MCF 10A (cell line): ENCODE measurements at regions of chrX and their contacts with region 1.

Region 1: GRCh38 chrX:41796577-41796976 is 72.6 kb downstream of the GPR82 start:
- DNase-seq: no peak
- H3K4me3 Mint-ChIP-seq: no peak overlapping the region
- H3K27ac Mint-ChIP-seq: no peak overlapping the region
- H3K4me1 Mint-ChIP-seq: no peaks in the 10 kb centered on the region
- H3K27me3 Mint-ChIP-seq: peaks cover 30% of the 10 kb centered on the region
- CTCF ChIP-seq: no peak

Region 2: DNA sequence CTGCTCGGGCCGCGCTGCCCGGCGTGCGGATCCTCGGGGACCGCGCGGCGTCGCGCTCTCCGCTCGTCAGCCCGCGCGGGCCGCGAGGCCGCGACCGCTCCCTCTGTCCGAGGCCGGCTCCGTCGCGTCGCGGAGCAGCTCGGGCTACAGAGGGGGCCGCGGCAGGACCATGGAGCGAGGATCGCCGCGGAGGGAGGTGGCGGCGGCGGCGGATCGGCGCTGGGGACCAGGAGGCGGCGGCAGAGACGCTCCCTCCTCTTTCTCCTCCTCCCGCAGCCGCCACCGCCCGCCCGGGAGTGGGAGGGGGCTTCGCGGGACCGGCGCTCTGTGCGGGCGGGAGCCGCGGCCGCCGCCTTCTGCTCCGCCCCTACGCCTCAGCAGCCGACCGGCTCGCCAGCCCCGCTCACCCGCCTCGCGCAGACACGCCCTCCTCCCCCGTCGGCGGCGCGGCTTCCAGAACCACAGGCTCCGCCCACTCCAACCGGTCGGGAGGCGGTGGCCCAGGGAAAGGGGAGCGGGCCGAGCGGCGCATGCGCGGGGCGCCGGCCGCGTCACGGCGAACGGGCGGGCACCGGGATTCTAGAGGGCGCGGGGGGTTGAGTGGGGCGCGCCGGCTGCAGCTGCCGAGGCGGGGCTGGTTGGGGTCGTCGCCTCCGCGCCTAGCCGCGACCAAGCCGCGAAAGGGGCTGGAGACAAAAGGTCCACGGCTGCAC is 126.8 kb after region 1 on chrX and contains the start of gene CASK:
- CTCF ChIA-PET with region 1: interaction called, 5 read pairs
- POLR2A ChIA-PET with region 1: no interaction called
- intact Hi-C with region 1: loop called (anchors 5 kb)
- DNase-seq: peak; percentile 87
- H3K4me3 Mint-ChIP-seq: peak within 1 kb of the TSS; percentile 82
- H3K27ac Mint-ChIP-seq: peak within 1 kb of the TSS; percentile 88
- H3K4me1 Mint-ChIP-seq: no peaks in the 10 kb centered on the region
- H3K27me3 Mint-ChIP-seq: peaks cover 26% of the 10 kb centered on the region
- CTCF ChIP-seq: no peak
- total RNA-seq, gene CASK: 34.9 and 43.2 TPM in 2 replicates

Region 3: DNA sequence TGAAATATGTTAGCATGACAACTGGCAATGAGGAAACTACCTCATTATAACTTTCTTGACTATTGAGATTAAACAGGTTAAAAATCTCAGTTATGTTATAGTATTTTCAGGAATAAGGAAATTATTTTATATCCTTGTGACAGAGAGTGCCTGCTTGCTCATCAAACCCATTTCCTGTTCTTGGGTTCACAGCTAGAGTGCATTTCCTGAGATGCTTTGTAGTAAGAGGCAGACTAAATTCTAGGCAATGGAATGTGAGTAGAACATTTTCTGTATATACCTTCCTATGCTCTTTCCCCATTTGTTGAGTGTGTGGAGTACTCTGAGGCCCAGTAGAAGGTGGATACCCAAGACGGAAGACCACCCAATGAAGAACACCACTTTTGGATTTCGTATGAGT is 223.6 kb after region 1 on chrX:
- CTCF ChIA-PET with region 1: no interaction called
- POLR2A ChIA-PET with region 1: no interaction called
- intact Hi-C with region 1: no loop called
- DNase-seq: no peak
- H3K4me3 Mint-ChIP-seq: no peak overlapping the region
- H3K27ac Mint-ChIP-seq: no peak overlapping the region
- H3K4me1 Mint-ChIP-seq: no peaks in the 10 kb centered on the region
- H3K27me3 Mint-ChIP-seq: peaks cover 19% of the 10 kb centered on the region
- CTCF ChIP-seq: no peak

Region 4: GRCh38 chrX:42530027-42530426 is 733.5 kb after region 1 on chrX:
- CTCF ChIA-PET with region 1: interaction called, 26 read pairs
- POLR2A ChIA-PET with region 1: no interaction called
- intact Hi-C with region 1: no loop called
- DNase-seq: peak; percentile 49
- H3K4me3 Mint-ChIP-seq: no peak overlapping the region
- H3K27ac Mint-ChIP-seq: no peak overlapping the region
- H3K4me1 Mint-ChIP-seq: peaks cover 6% of the 10 kb centered on the region
- H3K27me3 Mint-ChIP-seq: peaks cover 52% of the 10 kb centered on the region
- CTCF ChIP-seq: peak; percentile 16